Activated naive CD4-positive, alpha-beta T cell treated with anti-CD3 and anti-CD28 coated beads for 36 hours (primary cell): ENCODE measurements at regions of chr7 and their contacts with region 1.

Region 1: DNA sequence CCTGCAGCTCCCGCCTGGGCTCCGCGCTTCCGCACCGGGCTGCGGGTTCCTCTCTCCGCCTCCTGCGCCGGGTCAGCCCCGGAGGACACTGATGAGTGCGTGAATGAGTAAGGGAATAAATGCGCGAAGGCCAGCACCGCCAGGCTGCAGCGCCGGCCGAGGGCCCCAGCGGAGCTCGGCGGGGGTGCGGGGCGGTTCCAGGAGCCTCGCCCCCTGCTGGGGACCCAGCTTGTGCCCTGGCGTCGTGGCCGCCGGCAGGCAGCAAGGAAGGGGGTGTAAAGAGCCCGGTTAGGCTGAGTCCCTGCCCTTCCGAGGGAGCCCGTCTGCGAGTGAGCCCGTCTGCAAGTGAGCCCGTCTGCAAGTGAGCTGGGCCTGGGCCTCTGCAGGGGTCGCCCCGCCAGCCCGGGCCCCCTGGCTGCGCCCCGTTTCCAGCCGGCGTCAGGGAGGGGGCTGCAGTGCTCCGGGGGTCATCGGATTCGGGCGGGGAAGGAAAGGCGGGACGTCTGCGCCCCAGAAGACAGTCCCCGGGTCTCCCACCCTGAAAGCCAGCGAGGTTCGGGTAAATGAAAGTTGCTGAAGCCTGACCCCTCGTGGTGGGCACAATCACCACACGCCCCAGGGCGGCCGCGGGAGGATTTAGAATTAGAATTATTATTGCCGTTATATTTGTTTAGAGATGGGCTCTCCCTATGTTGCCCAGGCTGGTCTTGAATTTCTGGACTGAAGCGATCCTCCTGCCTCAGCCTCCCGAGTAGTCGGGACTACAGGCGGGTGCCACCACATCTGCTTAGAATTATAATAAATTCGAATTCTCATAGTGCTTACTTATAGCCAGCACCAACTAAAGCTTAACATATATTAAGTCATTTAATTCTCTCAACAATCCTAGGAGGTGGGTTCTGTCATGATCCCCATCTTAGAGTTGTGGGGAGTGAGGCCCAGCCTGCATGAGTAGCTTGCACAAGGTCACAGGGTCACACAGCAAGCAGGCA is 8.6 kb upstream of the CRYGN start:
- DNase-seq: peak; percentile 85
- H3K4me3 Mint-ChIP-seq: peak overlapping the region; percentile 65
- H3K27ac Mint-ChIP-seq: no peak overlapping the region
- H3K4me1 Mint-ChIP-seq: peaks cover 14% of the 10 kb centered on the region
- H3K27me3 Mint-ChIP-seq: no peaks in the 10 kb centered on the region

Region 2: DNA sequence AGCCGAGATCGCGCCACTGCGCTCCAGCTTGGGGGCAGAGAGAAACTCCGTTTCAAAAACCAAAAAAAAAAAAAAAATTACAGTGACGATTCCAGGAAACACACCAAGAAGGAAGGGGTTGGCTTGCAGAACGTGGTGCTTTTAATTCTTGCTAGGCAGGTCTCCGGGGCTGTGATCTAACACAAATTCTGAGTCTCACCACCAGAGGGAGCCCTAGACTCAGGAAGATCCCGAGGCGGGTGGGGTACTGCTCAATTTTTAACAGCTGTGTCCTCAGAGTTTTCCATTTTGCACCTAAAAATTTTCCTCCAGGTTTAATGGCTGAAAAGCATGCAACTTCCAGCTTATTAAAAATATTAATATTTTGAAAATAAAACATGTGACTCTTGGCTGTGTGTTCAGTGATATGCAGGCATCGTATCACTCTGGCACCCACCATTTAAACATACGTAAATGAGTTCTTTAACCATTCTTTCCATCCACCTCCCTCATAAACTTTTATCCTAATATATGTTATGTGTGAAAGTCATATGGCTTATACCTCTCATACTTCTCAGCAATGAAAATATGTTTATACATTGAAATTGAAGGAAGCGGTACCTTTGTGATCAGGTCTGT is 133.4 kb before region 1 on chr7:
- CTCF ChIA-PET with region 1: interaction called, 49 read pairs
- intact Hi-C with region 1: loop called (anchors 1 kb)
- DNase-seq: peak; percentile 87
- H3K4me3 Mint-ChIP-seq: peak overlapping the region; percentile 44
- H3K27ac Mint-ChIP-seq: no peak overlapping the region
- H3K4me1 Mint-ChIP-seq: peaks cover 9% of the 10 kb centered on the region
- H3K27me3 Mint-ChIP-seq: no peaks in the 10 kb centered on the region

Region 3: DNA sequence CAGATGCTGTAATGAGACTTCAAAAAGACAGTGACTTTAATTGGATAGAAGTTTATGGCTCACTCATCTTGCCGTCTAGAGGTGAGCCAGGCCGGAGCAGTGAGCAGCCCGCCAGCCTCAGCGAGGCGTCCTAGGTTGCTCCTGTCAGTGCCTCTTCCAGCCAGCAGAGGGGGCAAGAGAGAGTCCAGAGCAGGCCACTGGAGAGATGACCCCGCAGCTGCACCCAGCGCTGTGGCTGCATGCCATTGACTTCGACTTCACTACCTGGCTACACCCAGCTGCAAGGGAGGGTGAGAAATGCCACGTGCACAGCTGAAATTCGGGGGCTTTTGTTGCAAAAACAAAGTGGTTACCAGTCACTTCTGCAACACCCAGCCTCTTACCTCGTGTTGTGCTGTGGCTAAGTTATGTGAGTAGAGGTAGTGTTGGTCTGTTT is 80.4 kb before region 1 on chr7:
- CTCF ChIA-PET with region 1: interaction called, 198 read pairs
- intact Hi-C with region 1: loop called (anchors 1 kb)
- DNase-seq: peak; percentile 86
- H3K4me3 Mint-ChIP-seq: no peak overlapping the region
- H3K27ac Mint-ChIP-seq: no peak overlapping the region
- H3K4me1 Mint-ChIP-seq: peaks cover 7% of the 10 kb centered on the region
- H3K27me3 Mint-ChIP-seq: no peaks in the 10 kb centered on the region

Region 4: GRCh38 chr7:151408839-151409666 is 39.5 kb before region 1 on chr7:
- CTCF ChIA-PET with region 1: interaction called, 9 read pairs
- intact Hi-C with region 1: loop called (anchors 1 kb)
- DNase-seq: peak; percentile 27
- H3K4me3 Mint-ChIP-seq: peak overlapping the region; percentile 22
- H3K27ac Mint-ChIP-seq: no peak overlapping the region
- H3K4me1 Mint-ChIP-seq: peaks cover 35% of the 10 kb centered on the region
- H3K27me3 Mint-ChIP-seq: peaks cover 41% of the 10 kb centered on the region

Region 5: GRCh38 chr7:151460474-151460855 is 11.9 kb after region 1 on chr7:
- CTCF ChIA-PET with region 1: interaction called, 19 read pairs
- intact Hi-C with region 1: no loop called
- DNase-seq: no peak
- H3K4me3 Mint-ChIP-seq: no peak overlapping the region
- H3K27ac Mint-ChIP-seq: no peak overlapping the region
- H3K4me1 Mint-ChIP-seq: no peaks in the 10 kb centered on the region
- H3K27me3 Mint-ChIP-seq: peaks cover 7% of the 10 kb centered on the region